MCF 10A (cell line): ENCODE measurements at regions of chr14 and their contacts with region 1.

Region 1: DNA sequence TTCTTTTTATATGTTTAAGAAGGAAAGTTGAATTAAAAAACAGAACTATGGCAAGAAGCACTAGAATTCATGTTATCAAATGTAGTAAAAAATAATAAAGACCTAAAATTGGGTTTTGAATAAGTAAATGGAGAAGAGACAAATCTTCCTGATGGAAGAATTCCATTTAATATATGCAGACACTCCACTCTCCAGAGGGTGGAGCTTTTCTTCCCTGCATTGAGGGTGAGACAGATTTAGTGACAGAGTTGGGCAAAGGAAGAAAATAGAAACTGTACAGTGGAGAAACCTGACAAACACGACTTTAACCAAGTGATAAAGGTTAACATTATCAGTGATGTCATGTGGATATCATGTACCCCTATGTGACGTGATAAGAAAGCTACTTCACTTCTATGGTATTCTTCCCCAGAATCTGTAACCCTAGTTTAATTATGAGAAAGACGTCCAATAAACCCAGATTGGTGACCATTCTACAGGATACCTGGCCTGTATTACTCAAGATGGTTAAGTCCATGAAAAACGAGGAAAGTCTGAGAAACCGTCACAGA is 217.6 kb downstream of the PRKD1 start:
- DNase-seq: peak; percentile 20
- H3K4me3 Mint-ChIP-seq: no peak overlapping the region
- H3K27ac Mint-ChIP-seq: no peak overlapping the region
- H3K4me1 Mint-ChIP-seq: peaks cover 12% of the 10 kb centered on the region
- H3K27me3 Mint-ChIP-seq: no peaks in the 10 kb centered on the region
- CTCF ChIP-seq: no peak

Region 2: DNA sequence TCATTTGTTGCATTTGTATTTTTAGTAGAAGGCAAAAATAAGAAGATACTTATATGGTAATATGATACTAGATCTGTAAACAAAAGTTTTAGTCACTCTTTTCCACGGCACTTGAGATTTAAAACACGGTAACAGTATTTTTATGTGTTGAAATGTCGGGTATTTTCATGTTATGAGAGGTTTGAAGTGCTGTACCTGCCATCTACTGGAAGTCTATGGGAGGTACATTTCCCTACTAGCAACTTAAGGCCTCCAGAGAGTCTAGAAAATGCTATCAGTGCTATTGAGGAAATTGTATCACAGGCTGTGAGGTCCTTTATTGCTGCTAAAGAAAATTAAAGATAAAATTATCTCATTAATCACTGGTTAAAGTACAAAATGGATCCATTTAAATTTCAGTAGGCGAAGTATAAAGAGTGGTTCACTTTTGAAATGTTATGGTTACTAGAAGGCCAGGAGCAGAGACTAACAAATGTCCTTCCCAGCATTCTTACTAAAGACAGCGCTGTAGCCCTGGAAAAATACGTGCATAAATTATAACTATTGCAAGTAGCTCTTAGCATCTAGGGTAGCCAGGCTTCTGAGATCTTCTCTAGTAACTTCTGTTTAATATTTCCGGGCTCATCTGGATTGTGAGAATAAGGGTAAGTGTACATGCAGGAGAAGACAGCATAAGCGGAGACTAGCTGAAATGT is 295.2 kb after region 1 on chr14:
- CTCF ChIA-PET with region 1: no interaction called
- POLR2A ChIA-PET with region 1: no interaction called
- intact Hi-C with region 1: loop called (anchors 2 kb)
- DNase-seq: peak; percentile 68
- H3K4me3 Mint-ChIP-seq: no peak overlapping the region
- H3K27ac Mint-ChIP-seq: no peak overlapping the region
- H3K4me1 Mint-ChIP-seq: peaks cover 7% of the 10 kb centered on the region
- H3K27me3 Mint-ChIP-seq: no peaks in the 10 kb centered on the region
- CTCF ChIP-seq: peak; percentile 78